GM12878 (cell line): ENCODE measurements at regions of chr22 and their contacts with region 1.

Region 1: DNA sequence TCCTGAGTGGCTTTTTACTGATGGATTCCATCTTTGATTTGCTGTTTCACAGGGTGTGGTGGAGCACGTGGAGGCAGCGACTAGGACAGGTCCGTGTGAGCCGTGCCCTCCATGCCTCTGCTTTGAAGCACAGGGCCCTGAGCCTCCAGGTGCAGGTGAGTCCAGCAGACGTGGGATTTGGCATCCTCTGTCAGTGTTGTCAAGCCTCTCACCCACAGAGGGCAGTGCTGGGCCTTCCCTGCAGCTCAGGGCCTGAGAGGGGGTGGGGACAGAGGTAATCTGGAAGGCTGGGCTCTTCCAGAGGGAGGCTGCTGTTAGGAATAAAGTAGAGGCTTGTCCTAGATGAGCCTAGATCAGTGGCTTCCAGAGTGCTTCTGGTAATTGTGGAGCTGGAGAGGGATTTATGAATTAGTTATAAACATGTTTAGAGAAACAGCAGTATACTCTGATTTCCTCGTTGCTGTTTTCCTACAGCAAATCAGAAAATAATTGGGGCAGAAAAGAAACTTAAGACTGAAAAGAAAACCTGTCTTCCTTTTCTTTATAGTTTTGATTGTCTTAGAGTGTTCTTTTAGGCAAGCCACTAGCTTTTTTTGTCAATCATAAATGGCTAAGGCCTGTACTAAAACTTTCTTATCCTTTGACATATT is 65.0 kb downstream of the SFI1 start:
- DNase-seq: no peak
- ATAC-seq: peak; percentile 99
- H3K4me3 ChIP-seq: no peak overlapping the region
- H3K27ac ChIP-seq: no peak overlapping the region; the same call in 1 of the 2 replicates
- H3K4me1 ChIP-seq: no peaks in the 10 kb centered on the region
- H3K27me3 ChIP-seq: no peaks in the 10 kb centered on the region
- CTCF ChIP-seq: peak; percentile 69 to 87 (median 83)
- EP300 ChIP-seq: no peak
- POLR2A ChIP-seq: 0 out of 2 replicates have a peak, but pooled peaks have one; percentile 22
- RAD21 ChIP-seq: peak; percentile 78

Region 2: GRCh38 chr22:31361743-31362142 is 199.6 kb before region 1 on chr22:
- CTCF ChIA-PET with region 1: no interaction called
- POLR2A ChIA-PET with region 1: no interaction called
- RAD21 ChIA-PET with region 1: no interaction called
- SMC1A ChIA-PET with region 1: no interaction called
- in situ Hi-C with region 1: no loop called
- intact Hi-C with region 1: no loop called
- DNase-seq: no peak
- ATAC-seq: no peak
- H3K4me3 ChIP-seq: no peak overlapping the region
- H3K27ac ChIP-seq: no peak overlapping the region
- H3K4me1 ChIP-seq: peaks cover 3% of the 10 kb centered on the region; the same call in 1 of the 2 replicates
- H3K27me3 ChIP-seq: no peaks in the 10 kb centered on the region
- CTCF ChIP-seq: no peak
- EP300 ChIP-seq: no peak
- POLR2A ChIP-seq: no peak
- RAD21 ChIP-seq: no peak

Region 3: GRCh38 chr22:31451709-31452571 is 109.4 kb before region 1 on chr22:
- CTCF ChIA-PET with region 1: interaction called, 14 read pairs
- POLR2A ChIA-PET with region 1: no interaction called
- RAD21 ChIA-PET with region 1: interaction called, 9 read pairs
- SMC1A ChIA-PET with region 1: interaction called, 17 read pairs
- in situ Hi-C with region 1: no loop called
- intact Hi-C with region 1: no loop called
- DNase-seq: peak; percentile 15
- ATAC-seq: peak; percentile 92
- H3K4me3 ChIP-seq: no peak overlapping the region
- H3K27ac ChIP-seq: no peak overlapping the region
- H3K4me1 ChIP-seq: peaks cover 6% of the 10 kb centered on the region
- H3K27me3 ChIP-seq: no peaks in the 10 kb centered on the region
- CTCF ChIP-seq: peak; percentile 59 to 63 (median 59)
- EP300 ChIP-seq: no peak
- POLR2A ChIP-seq: no peak
- RAD21 ChIP-seq: peak; percentile 59

Region 4: GRCh38 chr22:31496007-31496734 is 65.2 kb before region 1 on chr22 and contains the start of gene SFI1:
- CTCF ChIA-PET with region 1: interaction called, 10 read pairs
- POLR2A ChIA-PET with region 1: no interaction called
- RAD21 ChIA-PET with region 1: interaction called, 3 read pairs
- SMC1A ChIA-PET with region 1: interaction called, 10 read pairs
- in situ Hi-C with region 1: no loop called
- intact Hi-C with region 1: no loop called
- DNase-seq: peak; percentile 92
- ATAC-seq: peak; percentile 89
- H3K4me3 ChIP-seq: peak within 1 kb of the TSS; percentile 96
- H3K27ac ChIP-seq: peak within 1 kb of the TSS; percentile 96
- H3K4me1 ChIP-seq: peaks cover 33% of the 10 kb centered on the region
- H3K27me3 ChIP-seq: no peaks in the 10 kb centered on the region
- CTCF ChIP-seq: peak; percentile 21 to 34 (median 24); a peak in 3 of 6 replicates
- EP300 ChIP-seq: no peak
- POLR2A ChIP-seq: peak; percentile 83
- RAD21 ChIP-seq: 0 out of 2 replicates have a peak, but pooled peaks have one; percentile 18
- polyA plus RNA-seq, gene SFI1: 6.3 to 6.6 TPM

Region 5: GRCh38 chr22:31537019-31537535 is 24.3 kb before region 1 on chr22:
- CTCF ChIA-PET with region 1: interaction called, 8 read pairs
- POLR2A ChIA-PET with region 1: interaction called, 3 read pairs
- RAD21 ChIA-PET with region 1: interaction called, 4 read pairs
- SMC1A ChIA-PET with region 1: interaction called, 13 read pairs
- in situ Hi-C with region 1: no loop called
- intact Hi-C with region 1: no loop called
- DNase-seq: peak; percentile 79
- ATAC-seq: peak; percentile 91
- H3K4me3 ChIP-seq: no peak overlapping the region
- H3K27ac ChIP-seq: peak overlapping the region; percentile 87
- H3K4me1 ChIP-seq: peaks cover 34% of the 10 kb centered on the region
- H3K27me3 ChIP-seq: no peaks in the 10 kb centered on the region
- CTCF ChIP-seq: no peak
- EP300 ChIP-seq: peak; percentile 82 to 88; a peak in 3 of 4 replicates
- POLR2A ChIP-seq: no peak
- RAD21 ChIP-seq: no peak

Region 6: DNA sequence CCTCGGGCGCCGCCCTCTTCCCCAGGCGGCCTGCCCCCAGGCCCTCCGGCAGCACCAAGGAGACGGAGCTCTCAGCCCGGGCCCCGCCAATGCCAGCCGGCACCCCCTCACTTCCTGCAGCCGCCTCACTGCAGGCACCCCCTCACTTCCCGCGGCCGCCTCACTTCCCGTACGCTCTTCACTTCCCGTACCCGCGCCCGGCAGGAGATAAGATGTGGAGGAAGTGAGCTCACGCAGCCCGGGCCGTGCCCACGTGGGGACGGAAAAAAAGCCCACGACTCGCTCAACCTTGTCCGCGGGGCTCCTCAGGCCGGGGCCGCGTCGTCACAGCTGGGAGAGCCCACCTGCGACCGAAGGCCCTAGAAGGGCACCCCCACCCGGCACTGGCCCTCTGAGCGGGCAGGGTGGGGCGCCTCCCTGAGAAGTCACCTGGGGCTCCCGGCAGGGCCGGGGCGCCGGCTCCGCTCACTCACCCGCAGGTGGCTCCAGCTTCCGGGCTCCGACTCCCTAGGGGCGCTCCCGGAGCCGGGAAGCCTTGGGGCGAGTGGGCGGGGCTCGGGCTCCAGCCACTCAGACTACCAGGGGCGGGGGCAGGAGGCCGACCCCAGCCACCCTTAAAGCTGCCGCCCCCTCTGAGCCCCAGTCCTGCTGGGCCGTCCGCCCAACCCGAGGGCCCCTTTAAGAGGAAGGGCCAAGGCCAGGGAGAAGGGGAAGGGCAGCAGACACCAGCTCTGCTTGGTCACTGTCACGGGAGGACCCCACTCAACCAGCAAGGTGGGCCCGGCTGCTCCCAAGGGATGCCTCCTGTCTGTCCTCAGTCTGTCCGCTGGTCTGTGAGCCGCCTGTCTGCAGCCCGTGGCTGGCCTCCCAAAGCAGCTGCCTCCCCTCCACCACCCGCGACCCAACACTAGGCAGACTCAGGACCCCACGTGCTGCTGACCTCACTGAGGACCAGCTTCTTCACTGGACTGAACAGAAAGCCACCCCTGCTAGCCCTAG is 69.3 kb after region 1 on chr22:
- CTCF ChIA-PET with region 1: interaction called, 65 read pairs
- POLR2A ChIA-PET with region 1: no interaction called
- RAD21 ChIA-PET with region 1: interaction called, 5 read pairs
- SMC1A ChIA-PET with region 1: interaction called, 9 read pairs
- in situ Hi-C with region 1: no loop called
- intact Hi-C with region 1: loop called (anchors 1 kb)
- DNase-seq: no peak
- ATAC-seq: peak; percentile 81
- H3K4me3 ChIP-seq: peak overlapping the region; percentile 93
- H3K27ac ChIP-seq: peak overlapping the region; percentile 83
- H3K4me1 ChIP-seq: peaks cover 38% of the 10 kb centered on the region
- H3K27me3 ChIP-seq: no peaks in the 10 kb centered on the region
- CTCF ChIP-seq: peak in 1 of 3 experiments; percentile 17; a peak in 2 of 6 replicates
- EP300 ChIP-seq: no peak
- POLR2A ChIP-seq: peak; percentile 58; the same call in 1 of the 2 replicates
- RAD21 ChIP-seq: no peak

Region 7: DNA sequence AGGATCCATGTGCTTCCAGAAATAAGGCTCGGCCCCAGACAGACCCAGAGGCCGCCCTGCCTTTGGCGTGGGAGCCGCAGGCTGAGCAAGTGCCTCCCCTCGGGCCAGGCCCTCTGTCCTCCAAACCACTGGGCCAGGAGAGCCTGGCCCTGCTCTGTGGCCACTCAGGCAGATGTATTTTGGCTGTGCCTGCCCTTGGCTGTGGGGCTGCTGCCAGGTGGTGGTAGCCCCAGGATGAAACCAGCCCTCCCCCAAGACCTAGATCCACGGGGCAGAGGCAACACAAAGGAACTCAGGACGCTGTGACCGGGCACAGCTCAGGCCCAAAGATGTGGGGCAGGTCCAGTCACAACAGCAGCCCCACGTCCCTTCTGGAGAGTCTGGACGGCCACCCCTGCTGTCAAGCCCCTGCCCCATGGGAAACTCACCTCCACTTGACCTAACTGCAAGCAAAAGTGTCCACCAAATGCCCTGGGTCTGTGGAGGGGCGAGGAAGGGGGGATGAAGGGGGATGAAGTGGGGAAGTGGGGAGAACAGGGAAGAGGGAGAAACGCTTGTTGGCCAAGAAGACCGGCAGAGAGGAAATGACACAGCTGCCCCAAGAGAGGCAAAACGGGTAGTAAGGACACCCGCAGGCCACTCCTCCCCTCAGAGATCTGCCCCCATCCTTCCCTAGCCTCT is 76.7 kb after region 1 on chr22:
- CTCF ChIA-PET with region 1: interaction called, 65 read pairs
- POLR2A ChIA-PET with region 1: no interaction called
- RAD21 ChIA-PET with region 1: interaction called, 5 read pairs
- SMC1A ChIA-PET with region 1: interaction called, 9 read pairs
- in situ Hi-C with region 1: no loop called
- intact Hi-C with region 1: loop called (anchors 1 kb)
- DNase-seq: no peak
- ATAC-seq: peak; percentile 83
- H3K4me3 ChIP-seq: peak overlapping the region; percentile 71
- H3K27ac ChIP-seq: peak overlapping the region; percentile 98
- H3K4me1 ChIP-seq: peaks cover 52% of the 10 kb centered on the region
- H3K27me3 ChIP-seq: no peaks in the 10 kb centered on the region
- CTCF ChIP-seq: no peak
- EP300 ChIP-seq: 0 out of 4 replicates have a peak, but pooled peaks of 1 of the 2 experiments have one; percentile 9
- POLR2A ChIP-seq: 0 out of 2 replicates have a peak, but pooled peaks have one; percentile 56
- RAD21 ChIP-seq: no peak